ENCODE measurements at regions of chr5 and their contacts with region 1.

Region 1: DNA sequence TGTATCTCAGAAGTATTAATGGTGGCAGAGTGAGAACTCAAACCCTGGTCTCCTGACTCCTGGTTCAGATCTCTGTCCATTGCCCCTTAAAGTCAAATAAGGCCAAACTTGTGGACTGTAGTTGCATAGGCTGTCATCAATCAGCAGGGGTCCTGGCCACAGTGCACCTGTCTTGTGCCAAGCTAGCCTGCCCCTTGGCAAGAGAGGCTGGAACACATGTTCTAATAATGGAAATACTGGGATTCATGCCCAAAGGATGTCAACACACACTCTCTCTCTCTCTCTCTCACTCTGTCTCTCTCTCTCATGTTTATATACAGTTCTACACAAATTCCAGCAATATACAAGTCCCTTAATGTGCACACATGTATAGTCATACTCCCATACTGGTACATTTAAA is 44.3 kb downstream of the GLRA1 start:
- DNase-seq: no peak
- H3K4me3 ChIP-seq: no peak overlapping the region
- H3K27ac ChIP-seq: no peak overlapping the region
- H3K4me1 ChIP-seq: no peaks in the 10 kb centered on the region
- H3K27me3 ChIP-seq: no peaks in the 10 kb centered on the region
- CTCF ChIP-seq: no peak
- POLR2A ChIP-seq: no peak

Region 2: DNA sequence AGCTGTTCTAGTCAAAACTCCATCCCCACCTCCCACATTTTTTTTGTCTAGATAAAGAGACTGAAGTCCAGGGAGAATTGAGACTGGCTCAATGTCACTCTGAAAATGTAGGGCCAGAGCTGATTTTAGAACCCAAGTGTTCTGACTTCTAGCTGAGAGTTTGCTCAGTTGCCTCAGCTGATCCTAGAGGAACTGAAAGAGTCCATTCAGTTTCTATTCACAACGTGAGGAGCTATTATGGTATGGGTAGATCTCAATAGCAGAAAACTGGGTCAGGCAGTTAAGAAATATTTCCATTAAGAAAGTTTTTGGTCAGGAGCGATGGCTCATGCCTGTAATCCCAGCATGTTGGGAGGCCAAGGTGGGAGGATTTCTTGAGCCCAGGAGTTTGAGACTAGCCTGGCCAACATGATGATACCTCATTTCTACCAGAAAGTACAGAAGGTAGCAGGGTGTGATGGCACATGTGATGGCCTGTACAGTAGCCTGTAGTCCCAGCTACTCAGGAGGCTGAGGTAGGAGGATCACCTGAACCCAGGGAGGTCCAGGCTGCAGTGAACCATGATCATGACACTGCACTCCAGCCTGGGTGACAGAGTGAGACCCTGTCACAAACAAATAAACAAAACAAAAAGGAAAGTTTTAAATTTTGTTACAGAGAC is 17.4 kb before region 1 on chr5:
- intact Hi-C with region 1: loop called (anchors 1 kb)
- DNase-seq: no peak
- H3K4me3 ChIP-seq: no peak overlapping the region
- H3K27ac ChIP-seq: no peak overlapping the region
- H3K4me1 ChIP-seq: no peaks in the 10 kb centered on the region
- H3K27me3 ChIP-seq: no peaks in the 10 kb centered on the region
- CTCF ChIP-seq: no peak
- POLR2A ChIP-seq: no peak

Region 3: DNA sequence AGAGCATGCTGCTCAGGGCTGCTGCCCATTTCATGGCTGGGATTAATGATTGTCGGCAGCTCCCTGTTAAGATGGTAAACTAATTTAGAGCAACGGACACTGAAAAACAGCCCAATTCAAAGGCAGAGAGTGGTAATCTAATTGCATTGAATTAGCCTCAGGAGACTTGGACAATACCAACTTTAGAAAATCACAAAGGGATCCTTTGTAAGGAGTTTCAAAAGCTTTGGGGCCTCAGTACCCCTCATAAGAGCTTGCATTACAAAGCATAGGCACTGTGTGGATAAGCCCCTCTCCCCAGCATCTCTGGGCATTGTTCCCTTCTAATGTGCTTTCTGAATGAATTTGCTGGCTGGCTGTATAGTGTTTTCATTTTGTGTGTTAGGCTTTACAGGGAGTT is 37.6 kb after region 1 on chr5:
- intact Hi-C with region 1: loop called (anchors 2 kb)
- DNase-seq: no peak
- H3K4me3 ChIP-seq: no peak overlapping the region
- H3K27ac ChIP-seq: no peak overlapping the region
- H3K4me1 ChIP-seq: no peaks in the 10 kb centered on the region
- H3K27me3 ChIP-seq: no peaks in the 10 kb centered on the region
- CTCF ChIP-seq: no peak
- POLR2A ChIP-seq: no peak

Measured in breast epithelium (tissue), 4 donors.